Heart right ventricle (tissue), 16 donors: ENCODE measurements at regions of chr20 and their contacts with region 1.

Region 1: DNA sequence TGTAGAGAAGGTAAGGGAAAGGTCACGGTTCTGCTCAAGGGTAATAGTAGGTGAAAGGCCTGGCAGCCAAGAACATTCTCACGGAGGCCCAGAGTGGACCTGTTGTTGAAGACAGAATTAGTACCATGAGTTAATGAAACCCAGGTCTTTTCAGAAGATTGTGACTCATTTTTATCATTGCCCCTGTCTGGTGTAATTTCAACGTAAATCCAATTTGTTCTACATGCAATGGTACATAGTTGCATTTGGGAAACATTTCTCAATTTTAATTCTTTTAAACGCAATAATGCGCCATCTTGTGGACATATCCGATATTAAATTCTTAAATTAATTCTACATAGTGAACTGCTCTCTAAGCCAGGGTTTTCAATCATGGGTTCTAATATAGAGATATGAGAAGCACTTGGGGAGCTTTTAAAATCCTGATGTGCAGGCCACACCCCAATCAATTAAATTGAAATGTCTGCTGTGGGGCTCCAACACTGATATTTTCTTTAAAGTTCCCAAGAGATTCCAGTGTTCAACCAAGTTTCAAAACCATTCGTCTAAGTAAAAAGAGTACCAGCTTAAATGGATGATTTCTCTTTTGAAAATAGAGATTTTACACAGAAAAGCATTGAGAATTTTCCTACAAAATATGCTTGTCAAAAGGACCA is 257.4 kb downstream of the PLCB1 start:
- DNase-seq: no peak
- ATAC-seq: peak in 7 of 8 donors; percentile 12 to 59 (median 48)
- H3K4me3 ChIP-seq: no peak overlapping the region
- H3K27ac ChIP-seq: peak overlapping the region in 7 of 10 donors; percentile 6 to 61 (median 45)
- H3K4me1 ChIP-seq: peaks cover 0 to 63% (median 24%) of the 10 kb centered on the region in 9 donors
- H3K27me3 ChIP-seq: no peaks in the 10 kb centered on the region
- CTCF ChIP-seq: peak; percentile 47 to 72 (median 59)

Region 2: DNA sequence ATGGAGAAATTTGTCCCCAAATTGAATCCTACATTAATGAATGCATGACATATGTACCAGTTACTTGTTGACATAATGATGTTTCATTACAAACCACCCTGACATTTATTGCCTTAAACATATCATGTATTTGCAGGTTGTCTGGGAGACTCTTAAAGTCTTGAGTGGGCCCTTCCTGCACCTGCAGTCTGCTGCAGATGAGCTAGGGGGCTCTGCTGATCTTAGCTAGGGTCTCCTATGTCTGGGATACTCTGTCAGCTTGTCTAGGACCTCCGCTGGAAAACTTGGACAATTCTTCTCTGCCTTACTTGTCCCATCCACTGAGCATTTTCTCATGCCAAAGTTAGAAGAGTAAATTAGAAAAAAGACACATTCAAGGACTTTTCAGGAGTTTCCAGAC is 1030.8 kb before region 1 on chr20:
- intact Hi-C with region 1: no loop called
- DNase-seq: no peak
- ATAC-seq: no peak
- H3K4me3 ChIP-seq: no peak overlapping the region
- H3K27ac ChIP-seq: no peak overlapping the region
- H3K4me1 ChIP-seq: no peaks in the 10 kb centered on the region
- H3K27me3 ChIP-seq: no peaks in the 10 kb centered on the region
- CTCF ChIP-seq: peak in 1 of 9 donors; percentile 27

Region 3: GRCh38 chr20:7935027-7935551 is 454.4 kb before region 1 on chr20:
- intact Hi-C with region 1: loop called in 1 of 10 experiments (anchors 5 kb)
- DNase-seq: no peak
- ATAC-seq: no peak
- H3K4me3 ChIP-seq: no peak overlapping the region
- H3K27ac ChIP-seq: no peak overlapping the region
- H3K4me1 ChIP-seq: no peaks in the 10 kb centered on the region
- H3K27me3 ChIP-seq: no peaks in the 10 kb centered on the region
- CTCF ChIP-seq: no peak

Region 4: DNA sequence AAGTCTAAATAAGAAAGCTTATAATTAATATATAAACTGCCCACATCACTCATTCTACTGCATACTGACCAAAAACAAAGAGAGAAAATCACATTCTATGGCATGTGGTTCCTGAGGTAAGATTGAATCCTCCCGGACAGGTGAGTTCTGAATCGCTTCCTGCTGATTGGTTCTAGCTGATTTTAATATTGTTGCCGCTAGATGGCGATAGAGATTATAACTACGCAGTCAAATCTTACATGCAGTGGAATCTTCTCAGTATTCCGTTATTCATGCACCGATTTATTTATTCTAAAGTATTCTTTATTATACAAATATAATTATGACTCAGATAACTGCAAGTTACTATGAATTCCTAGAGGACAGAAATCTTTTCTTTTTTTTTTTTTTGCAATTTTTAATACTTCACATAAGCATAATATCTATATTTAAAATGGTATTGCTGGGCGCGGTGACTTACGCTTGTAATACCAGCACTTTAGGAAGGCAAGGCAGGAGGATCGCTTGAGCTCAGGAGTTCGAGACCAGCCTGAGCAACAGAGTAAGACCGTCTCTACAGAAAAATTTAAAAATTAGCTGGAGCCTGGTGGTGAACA is 345.7 kb before region 1 on chr20:
- intact Hi-C with region 1: loop called in 7 of 10 experiments (anchors 5 to 10 kb)
- DNase-seq: peak in 1 of 2 donors; percentile 39
- ATAC-seq: peak in 6 of 8 donors; percentile 42 to 75 (median 64)
- H3K4me3 ChIP-seq: no peak overlapping the region
- H3K27ac ChIP-seq: no peak overlapping the region
- H3K4me1 ChIP-seq: peaks cover 0 to 6% (median 0%) of the 10 kb centered on the region in 9 donors
- H3K27me3 ChIP-seq: no peaks in the 10 kb centered on the region
- CTCF ChIP-seq: peak; percentile 63 to 85 (median 77)

Region 5: GRCh38 chr20:8424010-8424409 is 34.5 kb after region 1 on chr20:
- intact Hi-C with region 1: loop called in 1 of 10 experiments (anchors 5 kb)
- DNase-seq: no peak
- ATAC-seq: no peak
- H3K4me3 ChIP-seq: no peak overlapping the region
- H3K27ac ChIP-seq: no peak overlapping the region
- H3K4me1 ChIP-seq: peaks cover 0 to 45% (median 6%) of the 10 kb centered on the region in 9 donors
- H3K27me3 ChIP-seq: no peaks in the 10 kb centered on the region
- CTCF ChIP-seq: no peak

Region 6: DNA sequence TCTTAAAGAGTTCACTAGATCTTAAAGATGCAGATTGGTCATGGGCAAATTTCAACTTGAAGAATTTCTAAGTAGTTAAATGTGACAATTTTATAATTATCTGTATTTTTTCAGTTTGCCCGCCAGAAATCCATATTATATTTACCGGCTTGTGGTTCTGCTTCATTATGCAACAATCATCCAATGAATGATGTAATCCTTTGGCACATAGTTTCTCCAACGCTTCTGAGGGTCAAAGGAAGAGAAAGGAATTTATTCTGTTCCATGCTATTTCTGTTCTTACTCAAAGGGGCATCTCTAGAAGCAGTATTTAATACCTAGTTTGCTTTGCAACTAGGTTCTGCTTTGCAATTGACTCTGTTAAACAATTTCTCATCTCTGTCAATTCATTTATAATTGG is 320.1 kb after region 1 on chr20:
- intact Hi-C with region 1: loop called in 2 of 10 experiments (anchors 10 kb)
- DNase-seq: no peak
- ATAC-seq: no peak
- H3K4me3 ChIP-seq: no peak overlapping the region
- H3K27ac ChIP-seq: no peak overlapping the region
- H3K4me1 ChIP-seq: peaks cover 0 to 10% (median 0%) of the 10 kb centered on the region in 9 donors
- H3K27me3 ChIP-seq: no peaks in the 10 kb centered on the region
- CTCF ChIP-seq: no peak